ENCODE measurements at regions of chr2 and their contacts with region 1.

Region 1: GRCh38 chr2:176669398-176670174 is 400.3 kb downstream of the MTX2 start:
- DNase-seq: no peak
- H3K4me3 ChIP-seq: no peak overlapping the region
- H3K27ac ChIP-seq: peak overlapping the region; percentile 54 to 72
- H3K4me1 ChIP-seq: peaks cover 0 to 16% of the 10 kb centered on the region in 2 donors
- H3K27me3 ChIP-seq: no peaks in the 10 kb centered on the region
- CTCF ChIP-seq: no peak
- POLR2A ChIP-seq: no peak

Region 2: GRCh38 chr2:176821345-176821744 is 151.8 kb after region 1 on chr2:
- intact Hi-C with region 1: loop called (anchors 10 kb)
- DNase-seq: no peak
- H3K4me3 ChIP-seq: no peak overlapping the region
- H3K27ac ChIP-seq: no peak overlapping the region
- H3K4me1 ChIP-seq: peaks cover 0 to 5% of the 10 kb centered on the region in 2 donors
- H3K27me3 ChIP-seq: no peaks in the 10 kb centered on the region
- CTCF ChIP-seq: no peak
- POLR2A ChIP-seq: no peak

Region 3: DNA sequence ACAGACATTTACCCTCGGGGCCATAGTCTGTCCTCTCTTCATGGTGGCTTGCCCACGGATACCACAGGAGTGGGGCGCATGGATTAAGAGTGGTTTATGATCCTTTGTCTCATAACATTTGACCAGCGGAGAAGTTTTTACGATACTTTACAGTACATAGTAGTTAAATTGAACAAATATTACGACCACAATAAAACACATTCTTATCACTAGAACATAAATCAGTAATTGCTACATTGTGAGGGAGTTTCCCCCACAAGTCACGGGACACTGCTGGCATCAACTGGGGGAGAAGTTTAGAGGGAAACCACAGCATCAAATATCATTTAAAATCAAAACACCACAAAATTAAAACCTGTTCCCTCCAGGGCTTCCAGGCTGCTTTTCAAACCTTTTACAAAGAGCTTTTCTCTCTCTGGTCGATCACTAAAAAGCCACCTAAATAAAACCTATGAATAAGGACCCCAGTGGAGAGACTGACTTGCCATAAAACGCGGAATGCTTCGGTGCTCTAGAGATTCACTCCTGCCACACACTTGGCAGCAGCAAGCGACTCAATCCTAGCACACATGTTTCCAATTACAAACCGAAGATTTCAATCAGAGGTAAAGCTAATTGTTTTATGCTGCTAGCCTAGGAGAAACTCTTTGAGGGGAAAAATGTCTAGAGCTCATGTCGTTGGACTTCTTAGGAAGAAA is 369.4 kb after region 1 on chr2:
- intact Hi-C with region 1: no loop called
- DNase-seq: no peak
- H3K4me3 ChIP-seq: peak overlapping the region in 1 of 2 donors; percentile 9
- H3K27ac ChIP-seq: peak overlapping the region; percentile 54 to 58
- H3K4me1 ChIP-seq: peaks cover 0 to 7% of the 10 kb centered on the region in 2 donors
- H3K27me3 ChIP-seq: no peaks in the 10 kb centered on the region
- CTCF ChIP-seq: no peak
- POLR2A ChIP-seq: no peak

Measured in uterus (tissue), 4 donors.